ENCODE measurements at regions of chr9 and their contacts with region 1.

Region 1: DNA sequence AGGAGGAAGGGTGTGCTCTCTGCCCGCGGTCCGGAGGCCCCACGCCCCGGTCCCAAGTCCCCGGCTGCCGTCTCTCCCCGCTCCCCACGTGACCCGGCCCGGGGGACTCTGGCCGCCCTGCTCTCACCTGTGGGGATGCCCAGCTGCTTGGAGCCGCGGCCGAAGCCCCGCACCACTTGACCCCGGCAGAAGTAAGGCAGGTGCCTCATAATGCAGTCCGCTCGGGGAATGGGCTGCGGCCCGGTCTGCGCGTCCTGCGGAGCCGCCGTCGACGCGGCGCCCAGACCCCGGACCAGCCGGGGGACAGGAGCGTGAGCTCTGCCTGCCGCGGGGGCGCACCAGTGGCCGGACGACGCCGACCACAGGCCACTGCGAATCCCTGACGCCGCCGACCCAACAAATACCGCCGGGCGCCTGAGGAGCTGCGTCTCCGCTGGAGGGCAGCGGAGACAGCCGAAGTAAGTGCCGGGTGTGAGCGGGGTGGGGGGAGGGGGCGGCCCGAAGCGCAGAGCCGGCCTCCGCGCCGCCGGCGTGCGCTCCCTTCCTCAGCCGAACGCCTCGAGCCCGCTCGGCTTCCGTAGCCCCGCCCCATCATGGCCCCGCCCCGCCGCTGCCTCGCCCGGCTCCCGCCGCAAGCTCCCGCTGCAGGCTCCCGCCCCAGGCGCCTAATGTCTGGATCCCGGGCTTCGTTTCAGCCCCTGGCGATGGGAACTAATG is at the start of gene RFK:
- DNase-seq: peak; percentile 98
- ATAC-seq: peak; percentile 90
- H3K4me3 Mint-ChIP-seq: peak within 1 kb of the TSS; percentile 99
- H3K27ac Mint-ChIP-seq: peak within 1 kb of the TSS; percentile 99
- H3K4me1 Mint-ChIP-seq: peaks cover 22% of the 10 kb centered on the region
- H3K27me3 Mint-ChIP-seq: no peaks in the 10 kb centered on the region
- CTCF ChIP-seq: no peak
- total RNA-seq, gene RFK: 7.7 and 8.0 TPM in 2 replicates

Region 2: GRCh38 chr9:75027187-75028107 is 1366.7 kb before region 1 on chr9:
- CTCF ChIA-PET with region 1: no interaction called
- POLR2A ChIA-PET with region 1: no interaction called
- intact Hi-C with region 1: loop called (anchors 5 kb)
- DNase-seq: no peak
- ATAC-seq: peak; percentile 29
- H3K4me3 Mint-ChIP-seq: peak overlapping the region; percentile 96
- H3K27ac Mint-ChIP-seq: peak overlapping the region; percentile 95
- H3K4me1 Mint-ChIP-seq: peaks cover 36% of the 10 kb centered on the region
- H3K27me3 Mint-ChIP-seq: no peaks in the 10 kb centered on the region
- CTCF ChIP-seq: no peak

Region 3: DNA sequence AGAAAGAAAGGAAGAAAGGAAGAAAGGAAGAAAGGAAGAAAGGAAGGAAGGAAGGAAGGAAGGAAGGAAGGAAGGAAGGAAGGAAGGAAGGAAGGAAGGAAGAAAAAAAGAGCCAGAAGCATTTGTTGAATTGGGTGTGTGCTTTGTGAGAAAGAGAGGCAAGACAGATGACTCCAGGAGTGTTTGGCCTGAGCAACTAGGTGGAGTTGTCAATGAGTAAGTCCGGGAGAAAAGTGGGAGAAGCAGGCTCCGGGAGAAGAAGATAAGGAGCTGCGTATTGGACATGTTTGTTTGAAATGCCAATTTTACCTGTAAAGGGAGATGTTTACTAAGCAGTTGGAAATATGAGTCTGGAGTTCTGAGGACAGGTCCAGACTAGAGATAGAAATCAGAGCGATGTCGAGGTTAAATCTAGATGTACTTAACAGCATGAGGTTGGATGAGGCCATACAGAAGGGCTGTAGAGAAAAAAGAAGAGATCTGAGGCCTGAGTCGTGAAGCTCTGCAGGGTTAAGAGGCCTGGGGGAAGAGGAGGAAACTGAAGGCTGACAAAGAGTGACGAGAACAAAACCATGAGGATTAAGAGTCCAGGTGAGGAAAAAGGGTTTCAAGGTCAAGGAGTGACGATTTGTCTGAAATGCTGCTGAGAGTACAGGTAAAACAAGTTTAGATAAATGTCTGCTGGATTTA is 49.9 kb after region 1 on chr9:
- CTCF ChIA-PET with region 1: no interaction called
- POLR2A ChIA-PET with region 1: interaction called, 5 read pairs
- intact Hi-C with region 1: loop called (anchors 2 kb)
- DNase-seq: no peak
- ATAC-seq: no peak
- H3K4me3 Mint-ChIP-seq: no peak overlapping the region
- H3K27ac Mint-ChIP-seq: no peak overlapping the region
- H3K4me1 Mint-ChIP-seq: peaks cover 3% of the 10 kb centered on the region
- H3K27me3 Mint-ChIP-seq: no peaks in the 10 kb centered on the region
- CTCF ChIP-seq: no peak

Region 4: GRCh38 chr9:76576344-76576743 is 182.2 kb after region 1 on chr9:
- CTCF ChIA-PET with region 1: no interaction called
- POLR2A ChIA-PET with region 1: no interaction called
- intact Hi-C with region 1: loop called (anchors 2 kb)
- DNase-seq: peak; percentile 22
- ATAC-seq: peak; percentile 91
- H3K4me3 Mint-ChIP-seq: peak overlapping the region; percentile 9
- H3K27ac Mint-ChIP-seq: peak overlapping the region; percentile 76
- H3K4me1 Mint-ChIP-seq: peaks cover 46% of the 10 kb centered on the region
- H3K27me3 Mint-ChIP-seq: peaks cover 2% of the 10 kb centered on the region
- CTCF ChIP-seq: no peak

Region 5: DNA sequence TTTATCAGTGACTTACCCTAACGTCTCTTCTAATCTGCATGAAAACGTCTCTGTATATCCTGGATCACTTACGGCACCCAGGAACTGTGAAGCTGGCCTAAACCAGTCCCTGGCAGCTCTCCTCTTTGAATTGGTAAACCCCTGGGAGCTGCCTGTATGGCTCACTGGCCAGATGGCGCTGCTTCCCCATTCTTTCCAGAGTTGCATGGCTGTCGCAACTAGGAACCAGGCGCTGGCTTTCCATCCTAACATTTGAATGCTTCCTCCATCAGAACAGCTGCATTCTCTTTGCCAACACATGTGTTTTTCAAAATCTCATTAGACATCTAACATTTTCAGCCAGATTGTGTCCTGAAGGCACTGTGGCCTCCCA is 362.1 kb after region 1 on chr9:
- CTCF ChIA-PET with region 1: no interaction called
- POLR2A ChIA-PET with region 1: interaction called, 7 read pairs
- intact Hi-C with region 1: loop called (anchors 2 kb)
- DNase-seq: no peak
- ATAC-seq: no peak
- H3K4me3 Mint-ChIP-seq: peak overlapping the region; percentile 83
- H3K27ac Mint-ChIP-seq: peak overlapping the region; percentile 78
- H3K4me1 Mint-ChIP-seq: peaks cover 61% of the 10 kb centered on the region
- H3K27me3 Mint-ChIP-seq: no peaks in the 10 kb centered on the region
- CTCF ChIP-seq: no peak